ENCODE measurements at regions of chr7 and their contacts with region 1.

Region 1: DNA sequence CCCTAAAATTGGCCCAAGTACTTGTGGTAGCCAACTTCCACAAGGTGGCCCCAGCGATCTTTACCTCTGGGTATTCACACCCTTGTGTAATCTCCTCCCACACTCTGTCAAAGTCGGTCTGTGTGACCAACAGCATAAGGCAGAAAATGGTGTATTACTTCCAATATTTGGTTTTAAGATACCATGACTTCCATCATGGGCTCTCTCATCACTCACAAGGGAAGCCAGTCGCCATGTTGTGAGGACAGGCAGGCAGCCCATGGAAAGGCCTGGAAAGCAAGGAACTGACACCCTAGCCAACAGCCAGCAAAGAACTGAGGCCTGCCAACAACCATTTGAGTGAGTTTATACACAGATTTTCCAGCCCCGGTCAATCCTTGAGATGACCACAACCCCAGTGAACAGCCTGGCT is 91.0 kb upstream of the KMT2E start:
- DNase-seq: peak; percentile 73
- ATAC-seq: peak; percentile 88
- H3K4me3 Mint-ChIP-seq: no peak overlapping the region
- H3K27ac Mint-ChIP-seq: no peak overlapping the region
- H3K4me1 Mint-ChIP-seq: peaks cover 9% of the 10 kb centered on the region; the same call in 1 of the 2 replicates
- H3K27me3 Mint-ChIP-seq: no peaks in the 10 kb centered on the region
- CTCF ChIP-seq: peak; percentile 43

Region 2: DNA sequence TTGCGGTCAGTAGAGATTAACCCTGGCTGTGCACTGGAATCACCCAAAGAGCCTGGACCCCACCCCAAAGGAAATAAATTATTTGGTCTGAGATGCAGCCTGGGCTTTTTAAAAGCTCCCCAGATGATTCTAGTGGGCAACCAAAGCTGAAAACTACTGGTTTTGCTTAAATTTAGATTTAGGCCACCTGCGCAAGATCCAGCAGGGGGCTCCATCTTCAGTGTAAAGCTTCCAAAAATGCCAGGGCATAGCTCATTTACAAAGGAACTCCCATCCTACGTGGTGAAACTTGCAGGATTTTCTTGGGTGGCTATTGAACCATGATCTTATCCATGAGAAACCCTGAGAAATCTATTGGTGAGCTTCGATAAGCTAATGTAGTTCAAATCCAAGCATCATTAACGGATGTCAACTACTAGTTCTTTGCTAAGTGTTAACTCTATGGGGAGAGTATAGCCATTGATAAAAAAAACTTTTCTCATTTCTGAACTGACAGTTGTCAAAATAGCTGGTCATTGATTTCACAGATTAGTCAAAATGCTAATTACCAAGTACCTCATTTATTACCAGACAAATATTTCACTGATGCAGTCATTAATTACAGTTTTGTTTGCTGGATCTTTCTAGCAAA is 279.3 kb before region 1 on chr7:
- CTCF ChIA-PET with region 1: interaction called, 32 read pairs
- POLR2A ChIA-PET with region 1: no interaction called
- DNase-seq: peak; percentile 26
- ATAC-seq: peak; percentile 69
- H3K4me3 Mint-ChIP-seq: no peak overlapping the region
- H3K27ac Mint-ChIP-seq: no peak overlapping the region
- H3K4me1 Mint-ChIP-seq: peaks cover 5% of the 10 kb centered on the region; the same call in 1 of the 2 replicates
- H3K27me3 Mint-ChIP-seq: no peaks in the 10 kb centered on the region
- CTCF ChIP-seq: peak; percentile 46; the same call in 1 of the 2 replicates

Region 3: DNA sequence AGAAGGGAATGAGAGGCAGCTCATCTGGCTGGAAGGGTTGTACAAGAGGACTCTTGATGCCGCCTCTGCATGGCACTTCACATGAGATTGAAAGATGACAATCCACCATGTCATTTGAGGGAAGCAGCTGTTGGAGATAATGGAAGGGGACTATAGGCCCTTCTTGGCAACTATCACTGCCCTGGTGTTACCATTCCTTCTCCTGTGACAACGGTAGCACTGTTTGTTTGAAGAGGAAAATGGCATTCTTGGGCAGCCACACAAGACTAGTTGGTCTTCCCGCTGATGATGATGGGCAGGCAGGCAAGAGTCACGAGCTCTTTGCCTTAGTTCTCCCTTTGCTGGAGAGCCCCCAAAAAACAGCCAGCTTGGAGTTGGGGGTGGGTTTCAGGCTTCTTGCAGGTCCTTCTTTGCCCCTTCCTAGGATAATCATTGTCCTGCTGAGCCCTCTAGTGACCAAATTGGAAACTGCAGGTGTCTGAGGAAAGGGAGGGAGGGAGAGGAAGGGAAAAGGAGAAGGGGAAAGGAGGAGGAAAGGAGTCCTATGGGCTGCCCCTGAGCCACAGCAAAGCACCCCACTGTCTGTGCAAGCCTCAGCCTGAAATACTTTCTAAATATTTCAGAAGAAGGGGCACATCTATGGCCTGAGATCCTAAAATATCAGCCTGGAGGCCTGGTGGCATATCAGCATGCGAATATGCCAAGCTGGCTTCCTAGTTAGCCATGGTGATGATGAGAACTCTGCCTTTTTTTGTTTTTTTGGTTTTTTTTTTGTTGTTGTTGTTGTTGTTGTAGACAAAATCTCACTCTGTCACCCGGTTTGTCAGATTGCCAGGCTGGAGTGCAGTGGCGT is 74.7 kb before region 1 on chr7:
- CTCF ChIA-PET with region 1: interaction called, 12 read pairs
- POLR2A ChIA-PET with region 1: no interaction called
- DNase-seq: peak; percentile 84
- ATAC-seq: peak; percentile 94
- H3K4me3 Mint-ChIP-seq: no peak overlapping the region
- H3K27ac Mint-ChIP-seq: no peak overlapping the region
- H3K4me1 Mint-ChIP-seq: no peaks in the 10 kb centered on the region
- H3K27me3 Mint-ChIP-seq: no peaks in the 10 kb centered on the region
- CTCF ChIP-seq: peak; percentile 96

Region 4: GRCh38 chr7:104862719-104863118 is 60.3 kb before region 1 on chr7:
- CTCF ChIA-PET with region 1: interaction called, 13 read pairs
- POLR2A ChIA-PET with region 1: no interaction called
- DNase-seq: peak; percentile 54
- ATAC-seq: peak; percentile 81; the same call in 1 of the 2 replicates
- H3K4me3 Mint-ChIP-seq: no peak overlapping the region
- H3K27ac Mint-ChIP-seq: no peak overlapping the region
- H3K4me1 Mint-ChIP-seq: no peaks in the 10 kb centered on the region
- H3K27me3 Mint-ChIP-seq: peaks cover 57% of the 10 kb centered on the region
- CTCF ChIP-seq: peak; percentile 62; the same call in 1 of the 2 replicates

Region 5: DNA sequence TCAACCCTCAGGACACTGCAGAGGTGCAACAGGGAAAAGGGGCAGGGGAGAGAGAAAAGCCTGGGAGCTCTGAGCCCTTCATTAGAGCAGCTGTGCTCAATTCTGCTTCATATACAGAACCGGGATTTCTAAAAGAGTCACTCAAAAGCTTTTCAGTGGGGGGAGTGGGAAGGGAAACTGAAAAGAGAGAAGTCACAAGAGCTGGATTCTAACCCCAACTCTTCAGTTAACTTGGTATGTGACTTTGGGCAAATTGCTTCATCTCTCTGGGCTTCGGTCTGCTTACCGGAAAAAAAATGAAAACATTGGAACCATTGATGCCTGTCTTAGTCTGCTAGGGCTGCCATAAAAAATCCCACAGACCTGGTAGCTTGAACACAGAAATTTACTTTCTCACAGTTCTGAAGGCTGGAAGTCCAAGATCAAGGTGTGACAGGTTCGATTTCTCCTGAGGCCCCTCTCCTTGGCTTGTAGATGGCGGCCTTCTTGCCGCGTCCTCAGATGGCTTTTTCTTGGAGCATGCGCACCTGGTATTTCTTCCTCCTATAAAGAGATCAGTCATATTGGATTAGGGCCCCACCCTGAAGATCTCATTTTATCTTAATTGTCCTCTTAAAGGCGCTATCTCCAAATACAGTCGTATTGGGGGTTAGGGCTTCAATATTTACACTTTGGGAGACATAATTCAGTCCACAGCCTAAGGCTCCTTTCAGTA is 27.3 kb before region 1 on chr7:
- CTCF ChIA-PET with region 1: interaction called, 11 read pairs
- POLR2A ChIA-PET with region 1: interaction called, 4 read pairs
- DNase-seq: no peak
- ATAC-seq: no peak
- H3K4me3 Mint-ChIP-seq: no peak overlapping the region
- H3K27ac Mint-ChIP-seq: no peak overlapping the region
- H3K4me1 Mint-ChIP-seq: peaks cover 2% of the 10 kb centered on the region
- H3K27me3 Mint-ChIP-seq: no peaks in the 10 kb centered on the region; the same call in 1 of the 2 replicates
- CTCF ChIP-seq: no peak

Region 6: DNA sequence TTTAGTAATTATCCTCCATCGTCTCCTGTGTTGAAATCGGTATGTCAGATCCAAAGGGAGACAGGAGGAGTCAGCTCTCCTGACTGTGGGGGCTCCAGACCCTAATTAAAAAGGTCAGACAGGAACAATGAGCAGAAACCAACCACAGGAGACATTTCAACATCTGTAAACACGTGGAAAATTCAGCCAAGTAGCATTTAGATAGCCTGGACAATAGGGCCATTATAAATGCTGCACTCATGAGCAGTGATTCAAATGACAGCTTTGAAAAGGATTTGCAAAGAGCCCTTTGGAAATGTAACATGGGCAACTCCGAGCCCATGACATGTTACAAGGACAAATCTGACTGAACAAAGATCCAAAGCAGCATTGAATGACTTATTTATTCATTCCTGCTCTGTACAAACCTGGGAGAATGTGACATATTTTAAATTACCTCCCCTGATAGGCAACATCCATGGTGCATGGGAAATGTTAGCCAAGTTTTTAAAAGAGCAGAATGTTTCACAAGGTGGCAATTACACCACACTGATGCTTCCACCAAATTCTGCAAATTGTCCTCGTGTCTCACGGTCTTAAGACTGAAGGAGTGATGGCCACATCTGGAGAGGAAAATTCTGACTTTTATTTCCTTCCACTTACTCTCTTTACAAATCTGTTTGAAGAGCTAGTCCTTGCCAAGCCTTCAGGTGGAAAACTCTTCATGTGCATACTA is 22.3 kb before region 1 on chr7:
- CTCF ChIA-PET with region 1: interaction called, 10 read pairs
- POLR2A ChIA-PET with region 1: no interaction called
- DNase-seq: no peak
- ATAC-seq: no peak
- H3K4me3 Mint-ChIP-seq: no peak overlapping the region
- H3K27ac Mint-ChIP-seq: no peak overlapping the region
- H3K4me1 Mint-ChIP-seq: no peaks in the 10 kb centered on the region
- H3K27me3 Mint-ChIP-seq: no peaks in the 10 kb centered on the region; the same call in 1 of the 2 replicates
- CTCF ChIP-seq: no peak

Region 7: GRCh38 chr7:104983578-104984539 is 60.8 kb after region 1 on chr7:
- CTCF ChIA-PET with region 1: interaction called, 16 read pairs
- POLR2A ChIA-PET with region 1: interaction called, 4 read pairs
- DNase-seq: peak; percentile 83
- ATAC-seq: peak; percentile 94
- H3K4me3 Mint-ChIP-seq: peak overlapping the region; percentile 98
- H3K27ac Mint-ChIP-seq: peak overlapping the region; percentile 100
- H3K4me1 Mint-ChIP-seq: peaks cover 74% of the 10 kb centered on the region
- H3K27me3 Mint-ChIP-seq: no peaks in the 10 kb centered on the region
- CTCF ChIP-seq: peak; percentile 11; the same call in 1 of the 2 replicates

Region 8: GRCh38 chr7:105013221-105013815 is 90.3 kb after region 1 on chr7:
- CTCF ChIA-PET with region 1: no interaction called
- POLR2A ChIA-PET with region 1: no interaction called
- DNase-seq: peak; percentile 93
- ATAC-seq: peak; percentile 65
- H3K4me3 Mint-ChIP-seq: peak overlapping the region; percentile 99
- H3K27ac Mint-ChIP-seq: peak overlapping the region; percentile 100
- H3K4me1 Mint-ChIP-seq: peaks cover 42% of the 10 kb centered on the region
- H3K27me3 Mint-ChIP-seq: no peaks in the 10 kb centered on the region
- CTCF ChIP-seq: peak; percentile 11; the same call in 1 of the 2 replicates